ENCODE measurements at regions of chr14 and their contacts with region 1.

Region 1: DNA sequence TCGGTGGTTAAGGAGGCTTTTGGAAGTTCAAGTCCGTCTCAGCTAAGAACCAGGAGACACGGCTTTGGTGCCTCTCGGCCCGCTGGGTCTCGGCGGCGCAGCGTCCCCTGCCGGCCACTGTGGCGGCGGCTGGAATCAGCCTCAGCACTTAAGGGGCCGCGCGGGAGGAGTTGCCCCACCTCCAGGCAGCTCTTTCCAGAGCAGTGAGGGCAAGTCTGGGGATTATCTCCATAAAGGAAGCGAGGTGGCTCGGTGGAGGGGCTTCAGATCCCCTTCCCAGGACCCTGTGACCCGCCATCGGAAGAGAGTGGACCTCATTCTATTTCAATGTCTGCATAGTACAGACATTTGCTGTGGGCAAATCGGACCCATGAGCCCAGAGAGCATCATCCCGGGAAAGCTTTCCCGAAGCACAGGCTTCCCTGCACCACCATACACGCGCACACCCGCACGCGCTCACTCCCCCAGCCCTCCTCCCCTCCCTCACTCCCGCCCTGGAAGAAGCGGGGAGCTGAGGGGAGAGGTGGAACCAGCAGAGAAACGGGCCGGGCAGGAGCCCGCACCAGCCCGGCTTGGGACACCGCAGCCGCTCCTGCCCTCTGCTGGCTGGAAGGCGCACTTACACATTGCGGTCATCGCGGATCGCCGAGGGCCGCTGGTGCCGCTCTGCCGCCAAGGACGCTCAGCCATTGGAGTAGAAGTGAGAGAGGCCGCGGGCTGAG is 15.9 kb downstream of the RNASE2 start:
- DNase-seq: peak; percentile 86
- H3K4me3 Mint-ChIP-seq: peak overlapping the region; percentile 85
- H3K27ac Mint-ChIP-seq: peak overlapping the region; percentile 39
- H3K4me1 Mint-ChIP-seq: peaks cover 17% of the 10 kb centered on the region
- H3K27me3 Mint-ChIP-seq: peaks cover 28% of the 10 kb centered on the region
- CTCF ChIP-seq: peak; percentile 69

Region 2: DNA sequence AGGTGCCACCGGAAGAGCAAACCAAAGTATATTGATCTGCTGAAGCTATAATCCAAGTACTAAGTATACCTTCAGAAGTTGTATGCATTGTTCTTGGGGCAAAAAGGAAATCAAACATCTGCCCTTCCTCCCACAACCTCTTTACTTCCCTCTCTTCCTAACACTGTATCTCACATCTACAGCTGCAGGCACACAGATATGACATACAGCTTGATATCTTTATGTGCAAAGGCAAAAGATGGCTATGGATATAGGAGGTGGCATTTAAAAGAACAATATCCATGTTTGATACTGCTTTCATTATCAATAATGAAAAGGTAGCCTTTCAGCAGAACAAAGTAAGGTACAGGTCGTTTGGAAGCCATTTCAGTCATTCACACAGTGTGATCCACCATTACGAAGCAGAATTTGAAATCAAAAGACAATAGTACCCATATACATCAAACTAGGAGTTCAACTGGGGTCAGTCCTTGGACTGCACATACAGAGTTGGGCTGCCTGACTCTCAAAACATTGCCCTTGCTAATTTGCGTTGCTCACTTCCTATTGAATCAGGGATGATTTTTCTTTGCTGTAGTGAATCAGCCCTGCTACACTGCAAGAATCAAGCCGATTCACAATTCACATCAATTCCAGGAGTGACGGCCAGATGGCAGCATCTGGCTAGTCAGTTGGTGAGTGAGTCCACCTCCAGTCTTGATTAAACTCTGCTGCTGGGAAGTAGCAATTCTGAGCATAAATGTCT is 273.7 kb before region 1 on chr14:
- CTCF ChIA-PET with region 1: interaction called, 3 read pairs
- intact Hi-C with region 1: loop called (anchors 5 kb)
- DNase-seq: peak; percentile 75
- H3K4me3 Mint-ChIP-seq: no peak overlapping the region
- H3K27ac Mint-ChIP-seq: peak overlapping the region; percentile 76
- H3K4me1 Mint-ChIP-seq: peaks cover 9% of the 10 kb centered on the region
- H3K27me3 Mint-ChIP-seq: no peaks in the 10 kb centered on the region
- CTCF ChIP-seq: peak; percentile 71

Region 3: GRCh38 chr14:20956376-20956976 is 14.7 kb before region 1 on chr14:
- CTCF ChIA-PET with region 1: interaction called, 16 read pairs
- intact Hi-C with region 1: no loop called
- DNase-seq: no peak
- H3K4me3 Mint-ChIP-seq: no peak overlapping the region
- H3K27ac Mint-ChIP-seq: no peak overlapping the region
- H3K4me1 Mint-ChIP-seq: no peaks in the 10 kb centered on the region
- H3K27me3 Mint-ChIP-seq: peaks cover 63% of the 10 kb centered on the region
- CTCF ChIP-seq: no peak

Region 4: DNA sequence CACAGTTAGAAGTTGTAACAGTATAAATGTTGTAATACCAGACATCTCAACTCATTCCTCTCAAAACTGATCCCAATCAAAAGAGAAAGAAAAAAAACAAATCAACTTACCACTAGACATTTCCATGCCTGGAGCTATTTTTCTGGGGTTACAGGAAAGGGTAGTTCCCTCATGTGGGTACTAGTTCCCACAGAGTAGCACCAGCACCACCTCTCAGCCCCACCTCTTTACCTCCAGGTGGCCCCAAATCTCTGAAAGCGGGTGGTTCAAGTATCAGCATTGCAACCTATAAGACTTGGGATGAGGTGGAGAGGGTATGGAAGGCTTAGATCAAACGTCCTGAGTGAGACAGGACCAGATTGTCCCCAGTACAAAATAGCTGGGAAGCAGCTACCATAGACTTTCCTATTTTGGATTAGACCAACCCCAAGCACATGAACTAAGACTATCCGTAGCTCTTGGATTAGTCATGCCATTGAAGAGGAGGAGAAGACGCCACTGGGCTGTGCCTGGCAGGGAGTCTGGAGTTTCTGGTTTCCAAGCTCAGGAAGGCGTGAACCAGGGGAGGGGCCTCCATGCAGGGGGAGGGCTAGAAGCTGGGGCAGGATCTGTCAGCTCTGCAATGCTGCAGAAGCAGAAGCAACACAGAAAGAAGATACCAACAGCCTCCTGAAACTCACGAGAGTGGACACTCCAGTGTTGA is 27.7 kb after region 1 on chr14 and contains the start of gene SLC39A2:
- CTCF ChIA-PET with region 1: interaction called, 13 read pairs
- intact Hi-C with region 1: no loop called
- DNase-seq: peak; percentile 31
- H3K4me3 Mint-ChIP-seq: no peak within 1 kb of the TSS
- H3K27ac Mint-ChIP-seq: peak within 1 kb of the TSS; percentile 37
- H3K4me1 Mint-ChIP-seq: peaks cover 32% of the 10 kb centered on the region
- H3K27me3 Mint-ChIP-seq: no peaks in the 10 kb centered on the region
- CTCF ChIP-seq: no peak
- total RNA-seq, gene SLC39A2: not detected in 2 replicates

Region 5: GRCh38 chr14:21020977-21021600 is 49.9 kb after region 1 on chr14:
- CTCF ChIA-PET with region 1: no interaction called
- intact Hi-C with region 1: no loop called
- DNase-seq: no peak
- H3K4me3 Mint-ChIP-seq: no peak overlapping the region
- H3K27ac Mint-ChIP-seq: no peak overlapping the region
- H3K4me1 Mint-ChIP-seq: peaks cover 8% of the 10 kb centered on the region
- H3K27me3 Mint-ChIP-seq: peaks cover 28% of the 10 kb centered on the region
- CTCF ChIP-seq: no peak